ENCODE measurements at regions of chr12 and their contacts with region 1.

Region 1: GRCh38 chr12:56468216-56469006 is at the start of gene SPRYD4:
- DNase-seq: peak; percentile 93
- H3K4me3 Mint-ChIP-seq: peak within 1 kb of the TSS; percentile 97
- H3K27ac Mint-ChIP-seq: peak within 1 kb of the TSS; percentile 96
- H3K4me1 Mint-ChIP-seq: peaks cover 14% of the 10 kb centered on the region
- H3K27me3 Mint-ChIP-seq: no peaks in the 10 kb centered on the region
- CTCF ChIP-seq: peak; percentile 23
- total RNA-seq, gene SPRYD4: 3.5 and 3.9 TPM in 2 replicates

Region 2: GRCh38 chr12:56224102-56224701 is 244.2 kb before region 1 on chr12 and contains the start of gene NABP2:
- CTCF ChIA-PET with region 1: interaction called, 8 read pairs
- POLR2A ChIA-PET with region 1: interaction called, 18 read pairs
- intact Hi-C with region 1: no loop called
- DNase-seq: peak; percentile 98
- H3K4me3 Mint-ChIP-seq: peak within 1 kb of the TSS; percentile 82
- H3K27ac Mint-ChIP-seq: peak within 1 kb of the TSS; percentile 88
- H3K4me1 Mint-ChIP-seq: peaks cover 24% of the 10 kb centered on the region
- H3K27me3 Mint-ChIP-seq: no peaks in the 10 kb centered on the region
- CTCF ChIP-seq: peak; percentile 78
- total RNA-seq, gene NABP2: 53.3 and 56.2 TPM in 2 replicates

Region 3: DNA sequence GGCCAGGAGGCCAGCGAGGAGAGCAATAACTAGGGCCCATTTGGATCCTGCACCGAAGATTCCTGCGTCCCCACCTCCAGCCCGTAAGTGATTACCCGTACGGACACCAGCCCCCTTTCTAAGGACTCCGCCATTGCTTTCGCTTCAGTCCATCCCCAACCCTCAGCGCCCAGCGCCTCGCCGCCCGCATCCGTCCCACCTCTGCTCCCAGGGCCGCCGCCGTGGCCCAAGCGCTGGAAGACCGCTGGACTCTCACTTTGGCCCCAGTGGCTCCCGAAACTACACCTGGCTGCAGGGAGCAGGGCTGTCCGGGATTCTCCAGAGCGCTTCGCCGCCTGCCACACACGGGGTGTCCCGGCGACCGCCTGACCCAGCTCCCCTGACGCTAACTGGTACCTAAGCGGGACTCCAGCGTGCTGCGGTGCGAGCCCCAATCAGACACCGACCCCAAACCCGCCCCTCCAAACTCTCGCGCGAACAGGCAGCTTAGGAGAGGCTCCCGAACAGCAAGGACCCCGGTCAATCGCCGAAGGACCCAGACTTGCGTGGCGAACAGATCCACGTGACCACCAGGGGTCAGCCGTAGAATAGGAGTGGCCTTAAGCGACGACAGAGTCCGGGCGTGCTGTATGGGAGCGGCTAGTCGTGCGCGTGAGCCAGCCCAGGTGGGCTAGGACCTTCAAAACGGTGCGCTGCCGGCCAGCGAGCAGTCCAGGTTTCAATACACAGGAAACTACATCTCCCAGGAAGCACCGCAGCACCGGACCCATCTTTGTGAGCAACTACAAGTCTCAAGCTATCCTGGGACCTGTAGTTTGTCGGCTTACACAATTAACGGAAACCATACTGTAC is 152.6 kb before region 1 on chr12 and contains the start of gene CNPY2:
- CTCF ChIA-PET with region 1: interaction called, 15 read pairs
- POLR2A ChIA-PET with region 1: interaction called, 18 read pairs
- intact Hi-C with region 1: loop called (anchors 1 kb)
- DNase-seq: peak; percentile 99
- H3K4me3 Mint-ChIP-seq: peak within 1 kb of the TSS; percentile 96
- H3K27ac Mint-ChIP-seq: peak within 1 kb of the TSS; percentile 98
- H3K4me1 Mint-ChIP-seq: no peaks in the 10 kb centered on the region
- H3K27me3 Mint-ChIP-seq: no peaks in the 10 kb centered on the region
- CTCF ChIP-seq: no peak
- total RNA-seq, gene CNPY2: 169 and 210 TPM in 2 replicates

Region 4: GRCh38 chr12:56359851-56360767 is 108.3 kb before region 1 on chr12 and contains the start of gene STAT2:
- CTCF ChIA-PET with region 1: interaction called, 31 read pairs
- POLR2A ChIA-PET with region 1: interaction called, 54 read pairs
- intact Hi-C with region 1: loop called (anchors 1 kb)
- DNase-seq: peak; percentile 100
- H3K4me3 Mint-ChIP-seq: peak within 1 kb of the TSS; percentile 94
- H3K27ac Mint-ChIP-seq: peak within 1 kb of the TSS; percentile 97
- H3K4me1 Mint-ChIP-seq: peaks cover 8% of the 10 kb centered on the region
- H3K27me3 Mint-ChIP-seq: no peaks in the 10 kb centered on the region
- CTCF ChIP-seq: no peak
- total RNA-seq, gene STAT2: 61.2 and 101 TPM in 2 replicates

Region 5: GRCh38 chr12:56425193-56425592 is 43.2 kb before region 1 on chr12:
- CTCF ChIA-PET with region 1: no interaction called
- POLR2A ChIA-PET with region 1: no interaction called
- intact Hi-C with region 1: no loop called
- DNase-seq: no peak
- H3K4me3 Mint-ChIP-seq: no peak overlapping the region
- H3K27ac Mint-ChIP-seq: no peak overlapping the region
- H3K4me1 Mint-ChIP-seq: no peaks in the 10 kb centered on the region
- H3K27me3 Mint-ChIP-seq: no peaks in the 10 kb centered on the region
- CTCF ChIP-seq: no peak

Region 6: GRCh38 chr12:56448860-56449621 is 19.4 kb before region 1 on chr12 and contains the start of gene TIMELESS:
- CTCF ChIA-PET with region 1: interaction called, 20 read pairs
- POLR2A ChIA-PET with region 1: interaction called, 43 read pairs
- intact Hi-C with region 1: no loop called
- DNase-seq: peak; percentile 90
- H3K4me3 Mint-ChIP-seq: peak within 1 kb of the TSS; percentile 76
- H3K27ac Mint-ChIP-seq: peak within 1 kb of the TSS; percentile 90
- H3K4me1 Mint-ChIP-seq: peaks cover 8% of the 10 kb centered on the region
- H3K27me3 Mint-ChIP-seq: no peaks in the 10 kb centered on the region
- CTCF ChIP-seq: no peak
- total RNA-seq, gene TIMELESS: 10.1 and 14.0 TPM in 2 replicates

Region 7: GRCh38 chr12:56488041-56488955 is 19.9 kb after region 1 on chr12 and contains the start of gene GLS2:
- CTCF ChIA-PET with region 1: interaction called, 6 read pairs
- POLR2A ChIA-PET with region 1: interaction called, 19 read pairs
- intact Hi-C with region 1: no loop called
- DNase-seq: peak; percentile 86
- H3K4me3 Mint-ChIP-seq: peak within 1 kb of the TSS; percentile 89
- H3K27ac Mint-ChIP-seq: peak within 1 kb of the TSS; percentile 37
- H3K4me1 Mint-ChIP-seq: peaks cover 11% of the 10 kb centered on the region
- H3K27me3 Mint-ChIP-seq: no peaks in the 10 kb centered on the region
- CTCF ChIP-seq: no peak
- total RNA-seq, gene GLS2: 3.9 and 4.8 TPM in 2 replicates